Mammary epithelial cell (primary cell): ENCODE measurements at regions of chr2 and their contacts with region 1.

Region 1: GRCh38 chr2:48414980-48415835 is 114.7 kb upstream of the STON1 start:
- DNase-seq: no peak
- H3K4me3 ChIP-seq: no peak overlapping the region
- H3K27ac ChIP-seq: no peak overlapping the region
- H3K4me1 ChIP-seq: peaks cover 21% of the 10 kb centered on the region
- H3K27me3 ChIP-seq: no peaks in the 10 kb centered on the region
- CTCF ChIP-seq: no peak

Region 2: DNA sequence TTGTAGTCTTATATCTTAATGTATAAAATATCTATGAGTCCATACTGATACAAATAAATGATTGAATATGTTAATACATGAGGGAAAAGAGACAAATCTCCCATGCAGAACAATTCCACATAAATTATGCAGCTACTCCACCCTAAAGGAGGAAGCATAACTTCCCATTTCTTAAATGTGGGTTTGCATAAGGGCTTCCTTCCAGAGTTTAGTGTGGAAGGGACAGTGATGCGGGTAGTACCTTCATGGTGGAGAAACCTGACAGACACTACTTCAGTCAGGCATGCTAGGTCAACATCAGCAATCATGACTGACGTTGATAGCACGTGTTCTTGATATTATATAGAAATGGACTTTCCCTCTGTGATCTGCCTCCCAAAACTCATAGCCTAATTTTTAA is 32.2 kb before region 1 on chr2:
- CTCF ChIA-PET with region 1: no interaction called
- dilution Hi-C with region 1: no loop called
- in situ Hi-C with region 1: no loop called
- intact Hi-C with region 1: loop called (anchors 5 kb)
- DNase-seq: no peak
- H3K4me3 ChIP-seq: no peak overlapping the region
- H3K27ac ChIP-seq: no peak overlapping the region
- H3K4me1 ChIP-seq: no peaks in the 10 kb centered on the region
- H3K27me3 ChIP-seq: no peaks in the 10 kb centered on the region
- CTCF ChIP-seq: no peak

Region 3: DNA sequence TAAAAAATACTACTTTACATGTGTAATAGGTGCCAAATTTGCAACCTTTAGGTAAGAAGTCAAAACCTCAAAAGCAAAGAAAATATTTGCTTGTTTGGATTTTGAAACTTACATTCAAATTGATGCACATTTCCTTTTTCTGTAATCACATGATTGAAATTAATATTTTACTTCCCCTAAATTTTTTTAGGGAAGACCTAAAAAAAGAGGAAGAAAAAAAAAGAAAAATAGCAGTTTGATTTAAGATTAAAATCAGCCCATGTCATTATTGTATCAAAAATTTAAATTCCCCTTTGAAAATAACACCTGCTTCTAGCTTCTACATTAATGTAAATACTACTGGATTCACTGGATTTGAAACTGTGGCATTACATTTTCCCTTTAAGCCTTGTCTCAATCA is 46.5 kb after region 1 on chr2:
- CTCF ChIA-PET with region 1: no interaction called
- dilution Hi-C with region 1: no loop called
- in situ Hi-C with region 1: no loop called
- intact Hi-C with region 1: no loop called
- DNase-seq: no peak
- H3K4me3 ChIP-seq: no peak overlapping the region
- H3K27ac ChIP-seq: no peak overlapping the region
- H3K4me1 ChIP-seq: no peaks in the 10 kb centered on the region
- H3K27me3 ChIP-seq: no peaks in the 10 kb centered on the region
- CTCF ChIP-seq: no peak